BJ (cell line): ENCODE measurements at regions of chr11 and their contacts with region 1.

Region 1: GRCh38 chr11:77324508-77324907 is 23.0 kb upstream of the GDPD4 start:
- DNase-seq: no peak
- H3K4me3 ChIP-seq: no peak overlapping the region
- H3K27me3 ChIP-seq: no peaks in the 10 kb centered on the region
- CTCF ChIP-seq: no peak

Region 2: DNA sequence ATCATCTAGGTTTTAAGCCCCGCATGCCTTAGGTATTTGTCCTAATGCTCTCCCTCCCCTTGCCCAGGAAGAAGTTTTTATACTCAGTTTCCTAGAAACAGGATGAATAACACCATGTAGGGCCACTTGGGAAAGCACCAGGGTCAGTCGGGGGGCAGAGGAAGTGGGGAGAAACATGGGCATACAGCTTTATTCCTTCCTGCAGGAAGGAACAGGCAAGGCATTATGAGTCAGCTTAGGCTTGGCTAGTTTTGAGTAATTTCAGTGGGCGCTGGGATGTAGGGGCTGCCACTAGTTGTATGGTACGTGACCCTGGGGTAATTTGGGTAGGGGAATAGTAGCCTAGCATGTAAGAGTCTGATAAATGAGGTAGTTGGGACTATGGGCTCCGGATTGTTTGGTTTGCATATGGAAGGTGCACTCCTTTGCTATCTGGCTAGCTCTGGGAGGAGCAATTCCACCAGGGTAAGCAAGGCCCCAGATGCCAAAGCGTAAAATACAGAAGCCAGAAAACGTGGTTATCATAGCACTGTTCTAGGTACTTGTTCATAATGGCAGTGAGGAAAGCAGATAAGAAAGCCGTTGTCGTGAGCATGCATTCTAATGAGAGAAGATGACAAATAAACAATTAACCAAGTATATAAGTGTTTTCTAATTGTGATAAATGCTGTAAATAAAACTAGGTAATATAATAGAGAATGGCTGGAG is 439.0 kb before region 1 on chr11:
- CTCF ChIA-PET with region 1: no interaction called
- POLR2A ChIA-PET with region 1: no interaction called
- DNase-seq: no peak
- H3K4me3 ChIP-seq: no peak overlapping the region
- H3K27me3 ChIP-seq: no peaks in the 10 kb centered on the region
- CTCF ChIP-seq: no peak

Region 3: GRCh38 chr11:77287615-77288273 is 36.8 kb before region 1 on chr11:
- CTCF ChIA-PET with region 1: no interaction called
- POLR2A ChIA-PET with region 1: interaction called, 16 read pairs
- DNase-seq: peak; percentile 78
- H3K4me3 ChIP-seq: no peak overlapping the region
- H3K27me3 ChIP-seq: no peaks in the 10 kb centered on the region
- CTCF ChIP-seq: no peak

Region 4: GRCh38 chr11:77370226-77370625 is 45.7 kb after region 1 on chr11:
- CTCF ChIA-PET with region 1: no interaction called
- POLR2A ChIA-PET with region 1: no interaction called
- DNase-seq: no peak
- H3K4me3 ChIP-seq: no peak overlapping the region
- H3K27me3 ChIP-seq: no peaks in the 10 kb centered on the region
- CTCF ChIP-seq: no peak

Region 5: GRCh38 chr11:77386178-77386577 is 61.7 kb after region 1 on chr11:
- CTCF ChIA-PET with region 1: no interaction called
- POLR2A ChIA-PET with region 1: no interaction called
- DNase-seq: no peak
- H3K4me3 ChIP-seq: no peak overlapping the region
- H3K27me3 ChIP-seq: no peaks in the 10 kb centered on the region
- CTCF ChIP-seq: no peak

Region 6: GRCh38 chr11:77418155-77418970 is 93.9 kb after region 1 on chr11:
- CTCF ChIA-PET with region 1: no interaction called
- POLR2A ChIA-PET with region 1: no interaction called
- DNase-seq: no peak
- H3K4me3 ChIP-seq: no peak overlapping the region
- H3K27me3 ChIP-seq: no peaks in the 10 kb centered on the region
- CTCF ChIP-seq: no peak